ENCODE measurements at regions of chr5 and their contacts with region 1.

Region 1: DNA sequence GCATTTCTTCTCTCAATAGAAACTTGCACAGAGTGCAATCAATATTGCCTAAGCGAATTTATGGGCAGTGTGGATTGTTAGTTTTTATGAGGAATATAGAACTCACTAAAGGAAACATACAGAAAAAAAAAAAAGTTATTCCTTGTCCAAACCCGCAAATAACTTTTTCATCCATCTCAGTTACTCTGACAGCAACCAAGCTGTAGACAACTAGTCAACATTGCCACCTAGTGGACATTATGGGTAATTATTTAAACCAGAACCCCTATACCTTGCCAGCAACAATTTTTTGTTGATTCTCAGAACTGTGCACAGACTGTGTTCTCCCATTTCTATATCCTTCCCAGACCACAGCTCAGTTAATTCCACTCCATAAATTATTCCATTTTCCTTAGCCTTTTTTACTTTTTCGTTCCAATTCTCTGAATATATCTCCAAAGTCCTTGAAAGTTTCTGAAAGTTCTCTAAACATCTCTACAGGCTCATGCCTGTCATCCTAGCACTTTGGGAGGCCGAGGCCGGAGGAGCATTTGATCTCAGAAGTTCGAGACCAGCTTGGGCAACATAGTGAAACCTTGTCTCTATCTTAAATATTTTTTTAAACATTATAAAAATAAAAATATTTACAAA is 2.6 kb upstream of the AFAP1L1 start:
- H3K4me3 ChIP-seq: no peak overlapping the region
- H3K27ac ChIP-seq: no peak overlapping the region
- H3K4me1 ChIP-seq: peaks cover 3% of the 10 kb centered on the region; the same call in 1 of the 2 replicates
- CTCF ChIP-seq: peak; percentile 28

Region 2: DNA sequence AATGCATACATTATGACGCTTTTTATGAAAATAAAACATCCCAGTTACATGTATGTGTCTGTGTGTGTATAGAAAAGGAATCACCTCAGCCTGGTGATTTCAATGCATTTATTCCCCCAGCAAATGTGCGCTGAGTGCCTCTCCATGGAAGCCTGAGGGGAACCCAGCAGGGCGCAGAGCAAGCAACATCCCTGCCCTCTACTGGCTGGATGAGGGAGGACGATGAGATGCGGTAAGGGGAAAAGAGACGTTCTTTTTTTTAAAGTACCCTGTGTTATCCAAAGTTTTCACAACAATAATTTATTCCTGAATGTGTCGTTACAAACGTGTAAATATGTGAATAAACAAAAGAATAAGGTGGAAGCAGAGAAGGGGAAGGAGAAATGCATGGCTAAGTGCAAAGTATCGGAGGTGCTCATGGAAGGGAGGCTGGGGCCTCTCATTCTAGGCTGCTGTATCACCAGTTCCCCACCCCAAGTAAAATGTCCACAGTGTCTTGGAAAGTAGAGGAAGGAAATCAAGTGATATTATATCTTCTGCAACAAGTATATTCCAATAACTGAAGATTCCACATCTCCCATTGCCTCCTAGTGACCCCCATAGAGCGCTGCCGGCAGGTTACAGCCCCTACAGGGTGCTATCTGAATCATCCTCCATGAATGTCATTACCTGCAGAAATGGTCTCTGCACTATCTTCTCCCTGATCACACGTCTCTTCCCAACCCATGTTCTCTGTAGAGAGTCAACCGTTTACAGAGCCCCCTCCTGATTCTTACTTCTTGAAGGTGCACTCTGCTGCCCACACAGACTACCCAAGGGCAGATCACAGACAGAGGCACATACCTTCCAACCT is 140.8 kb before region 1 on chr5:
- CTCF ChIA-PET with region 1: interaction called, 11 read pairs
- POLR2A ChIA-PET with region 1: no interaction called
- H3K4me3 ChIP-seq: no peak overlapping the region
- H3K27ac ChIP-seq: no peak overlapping the region
- H3K4me1 ChIP-seq: no peaks in the 10 kb centered on the region
- CTCF ChIP-seq: peak; percentile 36; the same call in 1 of the 2 replicates

Region 3: GRCh38 chr5:149254506-149254905 is 14.5 kb before region 1 on chr5:
- CTCF ChIA-PET with region 1: interaction called, 14 read pairs
- POLR2A ChIA-PET with region 1: no interaction called
- H3K4me3 ChIP-seq: no peak overlapping the region
- H3K27ac ChIP-seq: no peak overlapping the region
- H3K4me1 ChIP-seq: no peaks in the 10 kb centered on the region
- CTCF ChIP-seq: no peak

Measured in HEK293 (cell line).